Naive thymus-derived CD4-positive, alpha-beta T cell (primary cell): ENCODE measurements at regions of chr5 and their contacts with region 1.

Region 1: GRCh38 chr5:14775857-14776256 is 95.7 kb downstream of the ANKH start:
- DNase-seq: no peak
- ATAC-seq: no peak
- H3K4me3 ChIP-seq: no peak overlapping the region
- H3K4me3 Mint-ChIP-seq: no peak overlapping the region
- H3K27ac ChIP-seq: no peak overlapping the region
- H3K27ac Mint-ChIP-seq: peak overlapping the region in 4 of 9 donors; percentile 1 to 41 (median 25)
- H3K4me1 ChIP-seq: no peaks in the 10 kb centered on the region
- H3K4me1 Mint-ChIP-seq: peaks cover 3 to 81% (median 56%) of the 10 kb centered on the region in 7 donors
- H3K27me3 ChIP-seq: no peaks in the 10 kb centered on the region
- H3K27me3 Mint-ChIP-seq: no peaks in the 10 kb centered on the region

Region 2: GRCh38 chr5:14790220-14790619 is 14.4 kb after region 1 on chr5:
- CTCF ChIA-PET with region 1: interaction called, 3 read pairs
- POLR2A ChIA-PET with region 1: no interaction called
- intact Hi-C with region 1: loop called in 1 of 2 experiments (anchors 2 kb)
- DNase-seq: no peak
- ATAC-seq: no peak
- H3K4me3 ChIP-seq: no peak overlapping the region
- H3K4me3 Mint-ChIP-seq: peak overlapping the region; percentile 4 to 83 (median 59)
- H3K27ac ChIP-seq: no peak overlapping the region
- H3K27ac Mint-ChIP-seq: peak overlapping the region; percentile 10 to 84 (median 72)
- H3K4me1 ChIP-seq: peaks cover 0 to 36% of the 10 kb centered on the region in 2 donors
- H3K4me1 Mint-ChIP-seq: peaks cover 16 to 82% (median 77%) of the 10 kb centered on the region in 7 donors
- H3K27me3 ChIP-seq: no peaks in the 10 kb centered on the region
- H3K27me3 Mint-ChIP-seq: no peaks in the 10 kb centered on the region